ENCODE measurements at regions of chr6 and their contacts with region 1.

Region 1: DNA sequence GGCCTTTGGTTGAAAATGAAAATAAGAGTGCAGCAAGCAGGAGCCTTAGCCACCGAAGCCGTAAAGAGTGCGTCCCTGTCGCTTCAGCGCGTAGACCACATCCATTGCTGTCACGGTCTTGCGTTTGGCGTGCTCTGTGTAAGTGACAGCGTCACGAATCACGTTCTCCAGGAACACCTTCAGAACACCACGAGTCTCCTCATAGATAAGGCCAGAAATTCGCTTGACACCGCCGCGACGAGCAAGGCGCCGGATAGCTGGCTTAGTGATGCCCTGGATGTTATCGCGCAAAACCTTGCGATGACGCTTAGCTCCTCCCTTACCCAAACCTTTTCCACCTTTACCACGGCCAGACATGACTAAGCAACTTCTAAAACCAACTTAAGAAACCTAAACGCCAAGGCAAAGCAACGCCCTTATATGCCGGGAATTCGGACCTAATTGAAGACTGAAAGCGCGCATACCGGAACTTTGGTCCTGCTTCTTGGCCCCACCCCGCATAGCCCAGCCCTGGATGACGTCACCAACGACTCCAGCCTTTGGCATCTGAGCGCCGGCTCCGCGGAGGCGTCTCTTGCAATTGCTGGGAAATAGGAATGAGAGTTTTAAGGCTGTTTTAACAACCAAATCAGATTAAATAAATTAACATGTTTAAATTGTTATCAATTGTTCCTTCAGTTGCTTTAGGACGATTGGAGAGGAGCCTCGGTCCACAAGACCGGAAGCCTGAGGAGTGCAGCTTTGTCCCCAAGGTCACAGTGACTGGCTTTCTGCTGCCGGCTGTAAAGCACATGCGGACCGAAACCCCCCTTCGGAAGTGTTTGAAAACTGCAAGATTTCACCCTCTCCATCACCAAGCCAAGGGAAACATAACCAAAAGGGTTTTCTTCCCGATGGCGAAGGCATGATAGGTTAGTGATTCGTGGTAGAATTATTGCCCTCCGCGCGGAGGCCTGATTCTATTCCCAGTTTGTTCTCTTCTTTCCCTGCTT is 79.6 kb upstream of the BTN3A2 start:
- DNase-seq: peak; percentile 91 to 98 (median 95)
- H3K4me3 ChIP-seq: peak overlapping the region; percentile 51 to 75
- H3K4me3 Mint-ChIP-seq: peak overlapping the region; percentile 83 to 95 (median 91)
- H3K27ac ChIP-seq: peak overlapping the region; percentile 81
- H3K27ac Mint-ChIP-seq: peak overlapping the region; percentile 95 to 99 (median 99)
- H3K4me1 ChIP-seq: peaks cover 13% of the 10 kb centered on the region
- H3K4me1 Mint-ChIP-seq: peaks cover 8 to 34% (median 19%) of the 10 kb centered on the region in 4 donors
- H3K27me3 ChIP-seq: no peaks in the 10 kb centered on the region
- H3K27me3 Mint-ChIP-seq: peaks cover 2 to 9% of the 10 kb centered on the region in 2 donors

Region 2: DNA sequence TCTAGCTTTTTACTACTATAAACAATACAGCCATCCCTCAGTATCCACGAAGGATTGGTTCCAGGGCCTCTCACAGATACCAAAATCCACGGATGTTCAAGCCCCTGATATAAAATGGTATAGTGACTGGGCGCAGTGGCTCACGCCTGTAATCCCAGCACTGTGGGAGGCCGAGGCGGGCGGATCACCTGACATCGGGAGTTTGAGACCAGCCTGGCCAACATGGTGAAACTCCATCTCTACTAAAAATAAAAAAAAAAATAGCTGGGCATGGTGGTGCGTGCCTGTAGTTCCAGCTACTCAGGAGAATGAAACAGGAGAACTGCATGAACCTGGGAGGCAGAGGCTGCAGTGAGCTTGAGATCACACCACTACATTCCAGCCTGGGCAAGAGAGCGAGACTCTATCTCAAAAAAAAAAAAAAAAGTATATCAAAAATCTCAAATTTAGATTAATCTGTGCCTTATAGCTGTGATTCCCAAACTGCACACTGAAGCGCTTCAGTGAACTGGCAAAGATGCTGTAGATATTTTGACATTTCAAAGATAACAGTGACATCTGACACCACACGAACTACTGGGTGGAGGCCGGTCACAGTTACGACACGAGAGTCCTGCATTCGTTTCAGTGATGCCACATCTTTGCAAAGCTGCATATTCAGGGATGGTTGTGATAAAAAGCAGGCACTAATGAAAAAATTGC is 1844.4 kb before region 1 on chr6:
- CTCF ChIA-PET with region 1: no interaction called
- POLR2A ChIA-PET with region 1: no interaction called
- intact Hi-C with region 1: no loop called
- DNase-seq: no peak
- H3K4me3 ChIP-seq: no peak overlapping the region
- H3K4me3 Mint-ChIP-seq: no peak overlapping the region
- H3K27ac ChIP-seq: no peak overlapping the region
- H3K27ac Mint-ChIP-seq: no peak overlapping the region
- H3K4me1 ChIP-seq: no peaks in the 10 kb centered on the region
- H3K4me1 Mint-ChIP-seq: peaks cover 0 to 2% (median under 1%) of the 10 kb centered on the region in 4 donors
- H3K27me3 ChIP-seq: no peaks in the 10 kb centered on the region
- H3K27me3 Mint-ChIP-seq: no peaks in the 10 kb centered on the region

Region 3: GRCh38 chr6:26175428-26176181 is 109.8 kb before region 1 on chr6:
- CTCF ChIA-PET with region 1: interaction called, 7 read pairs
- POLR2A ChIA-PET with region 1: interaction called, 58 read pairs
- intact Hi-C with region 1: loop called (anchors 1 kb)
- DNase-seq: peak; percentile 50 to 73 (median 70)
- H3K4me3 ChIP-seq: no peak overlapping the region
- H3K4me3 Mint-ChIP-seq: peak overlapping the region in 4 of 8 donors; percentile 37 to 70 (median 65)
- H3K27ac ChIP-seq: no peak overlapping the region
- H3K27ac Mint-ChIP-seq: peak overlapping the region; percentile 28 to 89 (median 78)
- H3K4me1 ChIP-seq: peaks cover 37% of the 10 kb centered on the region
- H3K4me1 Mint-ChIP-seq: peaks cover 21 to 40% (median 27%) of the 10 kb centered on the region in 4 donors
- H3K27me3 ChIP-seq: no peaks in the 10 kb centered on the region
- H3K27me3 Mint-ChIP-seq: no peaks in the 10 kb centered on the region

Region 4: DNA sequence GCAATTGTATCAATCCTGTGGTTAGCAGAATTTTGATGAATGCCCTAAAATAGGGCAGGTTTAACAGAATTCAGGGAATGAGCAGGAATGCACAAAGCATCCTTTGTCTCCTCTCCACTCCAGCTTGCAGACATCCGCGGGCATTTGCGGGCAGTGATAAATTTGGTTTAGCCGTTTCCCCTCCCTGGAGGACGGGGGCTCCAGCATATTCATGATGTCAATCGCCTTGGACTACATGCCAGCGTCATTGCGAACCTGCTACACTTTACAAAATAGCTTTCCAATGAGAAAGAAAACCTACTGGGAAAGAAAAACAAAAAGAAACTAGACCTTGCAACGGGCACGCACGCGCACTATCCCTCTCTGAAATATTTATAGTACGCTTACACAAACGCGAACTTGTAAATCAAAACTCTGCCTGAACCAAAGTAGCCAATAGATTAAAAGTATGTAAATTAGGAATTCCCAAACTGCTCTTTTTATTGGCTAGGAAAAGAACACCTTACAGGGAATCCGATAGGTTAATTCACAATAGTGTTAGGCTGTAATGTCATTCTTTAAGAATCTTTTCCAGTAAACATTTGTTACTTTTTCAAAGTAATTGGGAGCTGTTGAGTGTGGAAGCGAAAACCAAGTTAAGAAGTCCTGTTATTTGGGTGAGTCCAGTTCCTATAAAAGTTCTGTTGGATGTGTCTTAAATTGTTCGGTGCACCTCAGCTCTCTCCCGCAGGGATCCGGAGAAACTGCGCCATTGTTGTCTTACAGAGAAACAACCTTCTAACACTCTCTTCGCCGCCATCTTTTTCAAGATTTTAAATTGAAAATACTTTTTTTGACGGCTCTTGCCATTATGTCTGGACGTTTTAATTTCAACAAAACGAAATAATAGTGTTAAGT is 61.5 kb before region 1 on chr6:
- CTCF ChIA-PET with region 1: no interaction called
- POLR2A ChIA-PET with region 1: interaction called, 55 read pairs
- intact Hi-C with region 1: no loop called
- DNase-seq: peak; percentile 74 to 87 (median 84)
- H3K4me3 ChIP-seq: peak overlapping the region; percentile 45 to 82
- H3K4me3 Mint-ChIP-seq: no peak overlapping the region
- H3K27ac ChIP-seq: peak overlapping the region; percentile 69
- H3K27ac Mint-ChIP-seq: no peak overlapping the region
- H3K4me1 ChIP-seq: peaks cover 21% of the 10 kb centered on the region
- H3K4me1 Mint-ChIP-seq: peaks cover 6 to 8% (median 7%) of the 10 kb centered on the region in 4 donors
- H3K27me3 ChIP-seq: no peaks in the 10 kb centered on the region
- H3K27me3 Mint-ChIP-seq: no peaks in the 10 kb centered on the region

Region 5: DNA sequence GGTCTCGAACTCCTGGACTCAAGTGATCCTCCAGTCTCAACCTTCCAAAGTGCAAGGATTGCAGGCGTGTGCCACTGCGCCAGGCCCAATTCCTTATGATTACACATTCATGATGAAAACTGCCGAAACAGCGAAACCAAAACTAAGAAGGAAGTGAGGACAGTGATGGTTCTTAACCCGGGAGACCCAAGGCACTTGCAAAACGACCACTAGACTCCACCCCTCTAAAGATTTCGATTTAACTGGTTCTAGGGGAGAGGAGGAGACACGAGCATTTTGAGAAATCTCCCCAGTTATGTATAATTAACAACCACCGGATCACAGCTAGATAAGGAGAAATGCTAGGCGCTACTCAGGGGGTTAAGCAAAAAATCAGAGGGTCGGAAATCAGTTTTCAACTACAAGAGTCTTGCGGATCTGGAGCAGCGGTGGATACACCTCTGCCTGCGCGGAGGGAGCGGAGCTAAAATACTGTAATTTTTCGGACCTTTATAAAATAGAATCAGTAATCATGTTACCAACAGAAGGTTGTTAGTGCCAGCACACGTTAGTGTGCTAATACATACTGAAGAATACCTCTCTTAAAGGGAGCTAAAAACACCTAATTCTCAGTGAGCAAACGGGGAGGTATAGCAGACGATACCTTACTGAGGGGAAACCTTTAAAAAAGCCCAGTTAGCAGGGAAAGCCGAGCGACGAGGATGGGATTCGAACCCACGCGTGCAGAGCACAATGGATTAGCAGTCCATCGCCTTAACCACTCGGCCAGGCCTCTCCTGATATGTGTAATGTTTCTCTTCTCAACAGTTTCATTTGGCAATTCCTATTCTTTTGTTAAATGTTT is 19.6 kb after region 1 on chr6:
- CTCF ChIA-PET with region 1: no interaction called
- POLR2A ChIA-PET with region 1: interaction called, 23 read pairs
- intact Hi-C with region 1: no loop called
- DNase-seq: peak; percentile 48 to 80 (median 74)
- H3K4me3 ChIP-seq: peak overlapping the region; percentile 33 to 59
- H3K4me3 Mint-ChIP-seq: peak overlapping the region; percentile 86 to 97 (median 93)
- H3K27ac ChIP-seq: peak overlapping the region; percentile 51
- H3K27ac Mint-ChIP-seq: peak overlapping the region in 6 of 7 donors; percentile 92 to 96 (median 94)
- H3K4me1 ChIP-seq: peaks cover 19% of the 10 kb centered on the region
- H3K4me1 Mint-ChIP-seq: peaks cover 19 to 41% (median 31%) of the 10 kb centered on the region in 4 donors
- H3K27me3 ChIP-seq: no peaks in the 10 kb centered on the region
- H3K27me3 Mint-ChIP-seq: peaks cover 0 to 2% of the 10 kb centered on the region in 2 donors

Region 6: GRCh38 chr6:26537846-26538571 is 252.6 kb after region 1 on chr6 and contains the start of gene HMGN4:
- CTCF ChIA-PET with region 1: no interaction called
- POLR2A ChIA-PET with region 1: interaction called, 18 read pairs
- intact Hi-C with region 1: no loop called
- DNase-seq: peak; percentile 92 to 96 (median 95)
- H3K4me3 ChIP-seq: peak within 1 kb of the TSS; percentile 83 to 90
- H3K4me3 Mint-ChIP-seq: peak within 1 kb of the TSS; percentile 89 to 98 (median 93)
- H3K27ac ChIP-seq: peak within 1 kb of the TSS; percentile 90
- H3K27ac Mint-ChIP-seq: peak within 1 kb of the TSS; percentile 94 to 99 (median 97)
- H3K4me1 ChIP-seq: peaks cover 66% of the 10 kb centered on the region
- H3K4me1 Mint-ChIP-seq: peaks cover 38 to 76% (median 56%) of the 10 kb centered on the region in 4 donors
- H3K27me3 ChIP-seq: no peaks in the 10 kb centered on the region
- H3K27me3 Mint-ChIP-seq: peaks cover 3 to 6% of the 10 kb centered on the region in 2 donors
- total RNA-seq, gene HMGN4: 102 to 105 TPM

Region 7: DNA sequence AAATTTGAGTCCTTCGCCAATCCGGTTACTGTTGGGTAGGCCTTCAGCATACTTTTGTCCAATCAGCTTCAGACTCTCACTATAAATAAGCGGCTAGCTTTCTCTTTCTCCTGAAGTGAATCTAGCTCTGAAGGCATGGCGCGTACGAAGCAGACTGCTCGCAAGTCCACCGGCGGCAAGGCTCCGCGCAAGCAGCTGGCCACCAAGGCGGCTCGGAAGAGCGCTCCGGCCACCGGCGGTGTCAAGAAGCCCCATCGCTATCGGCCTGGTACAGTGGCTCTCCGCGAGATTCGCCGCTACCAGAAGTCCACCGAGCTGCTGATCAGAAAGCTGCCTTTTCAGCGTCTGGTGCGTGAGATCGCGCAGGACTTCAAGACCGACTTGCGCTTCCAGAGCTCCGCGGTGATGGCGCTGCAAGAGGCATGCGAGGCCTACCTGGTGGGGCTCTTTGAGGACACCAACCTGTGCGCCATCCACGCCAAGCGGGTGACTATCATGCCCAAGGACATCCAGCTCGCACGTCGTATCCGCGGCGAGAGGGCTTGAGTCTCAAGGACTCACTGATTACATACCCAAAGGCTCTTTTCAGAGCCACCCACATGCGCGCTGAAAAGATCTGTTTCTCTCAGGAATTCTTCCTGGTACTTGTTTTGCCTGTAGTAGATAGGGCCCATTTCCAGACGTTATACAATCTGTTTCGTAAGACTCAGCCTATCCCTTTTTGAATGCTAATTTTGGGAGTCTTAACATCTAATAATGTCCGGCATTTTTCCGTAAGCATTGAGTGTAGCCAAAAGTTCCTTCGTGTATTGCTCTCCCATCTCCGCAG is 1524.7 kb after region 1 on chr6:
- CTCF ChIA-PET with region 1: no interaction called
- POLR2A ChIA-PET with region 1: interaction called, 11 read pairs
- intact Hi-C with region 1: no loop called
- DNase-seq: peak; percentile 85 to 94 (median 92)
- H3K4me3 ChIP-seq: peak overlapping the region; percentile 31 to 67
- H3K4me3 Mint-ChIP-seq: peak overlapping the region; percentile 92 to 99 (median 96)
- H3K27ac ChIP-seq: peak overlapping the region; percentile 79
- H3K27ac Mint-ChIP-seq: peak overlapping the region; percentile 94 to 98 (median 97)
- H3K4me1 ChIP-seq: peaks cover 49% of the 10 kb centered on the region
- H3K4me1 Mint-ChIP-seq: peaks cover 39 to 74% (median 50%) of the 10 kb centered on the region in 4 donors
- H3K27me3 ChIP-seq: no peaks in the 10 kb centered on the region
- H3K27me3 Mint-ChIP-seq: no peaks in the 10 kb centered on the region